Gastrocnemius medialis (tissue), 4 donors: ENCODE measurements at regions of chr19 and their contacts with region 1.

Region 1: DNA sequence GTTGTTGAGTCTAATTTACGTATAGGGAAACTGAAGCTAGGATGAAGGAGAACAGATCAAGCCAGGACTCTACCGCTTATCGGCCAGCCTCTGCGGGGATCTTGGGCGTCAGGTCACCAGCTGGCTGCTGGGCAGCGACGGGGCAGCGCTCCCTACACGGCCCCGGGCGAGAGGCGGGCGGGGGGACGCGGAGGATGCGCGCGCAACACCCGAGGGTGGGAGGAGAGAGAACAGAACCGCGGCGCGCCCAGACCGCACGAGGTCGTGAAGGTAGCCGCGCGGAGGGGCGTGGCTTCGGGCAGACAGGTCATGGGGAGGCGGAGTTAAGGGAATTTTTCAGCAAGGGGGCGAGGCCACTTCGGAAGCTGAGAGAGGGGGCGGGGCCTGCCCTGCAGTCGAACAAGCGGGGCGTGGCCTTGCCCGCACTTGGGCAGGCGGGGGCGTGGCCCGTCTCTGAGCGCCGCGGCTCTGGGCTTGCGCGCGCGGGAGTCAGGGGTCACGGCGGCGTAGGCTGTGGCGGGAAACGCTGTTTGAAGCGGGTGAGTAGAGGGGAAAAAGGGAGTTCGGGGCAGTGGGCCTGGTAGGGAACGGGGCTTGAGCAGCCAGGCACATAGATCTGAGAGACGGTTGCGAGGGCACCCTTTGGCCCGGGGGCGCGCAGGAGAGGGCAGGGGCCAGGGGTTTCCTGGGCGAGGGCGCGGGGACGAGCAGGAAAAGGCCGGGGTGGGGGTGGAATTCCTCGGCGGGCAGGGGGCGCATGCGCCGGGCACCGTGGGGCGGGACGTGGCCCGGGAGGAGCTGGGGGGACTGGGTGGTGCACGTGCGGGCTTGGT is at the start of gene POLD1:
- DNase-seq: peak; percentile 95 to 97
- ATAC-seq: peak; percentile 93 to 94
- H3K4me3 ChIP-seq: peak within 1 kb of the TSS; percentile 63 to 83 (median 76)
- H3K27ac ChIP-seq: peak within 1 kb of the TSS; percentile 71 to 95 (median 84)
- H3K4me1 ChIP-seq: peaks cover 8 to 14% of the 10 kb centered on the region in 2 donors
- H3K27me3 ChIP-seq: no peaks in the 10 kb centered on the region
- CTCF ChIP-seq: no peak
- POLR2A ChIP-seq: peak in 1 of 2 donors; percentile 32
- total RNA-seq, gene POLD1: 4.0 to 18.3 (median 6.0) TPM

Region 2: DNA sequence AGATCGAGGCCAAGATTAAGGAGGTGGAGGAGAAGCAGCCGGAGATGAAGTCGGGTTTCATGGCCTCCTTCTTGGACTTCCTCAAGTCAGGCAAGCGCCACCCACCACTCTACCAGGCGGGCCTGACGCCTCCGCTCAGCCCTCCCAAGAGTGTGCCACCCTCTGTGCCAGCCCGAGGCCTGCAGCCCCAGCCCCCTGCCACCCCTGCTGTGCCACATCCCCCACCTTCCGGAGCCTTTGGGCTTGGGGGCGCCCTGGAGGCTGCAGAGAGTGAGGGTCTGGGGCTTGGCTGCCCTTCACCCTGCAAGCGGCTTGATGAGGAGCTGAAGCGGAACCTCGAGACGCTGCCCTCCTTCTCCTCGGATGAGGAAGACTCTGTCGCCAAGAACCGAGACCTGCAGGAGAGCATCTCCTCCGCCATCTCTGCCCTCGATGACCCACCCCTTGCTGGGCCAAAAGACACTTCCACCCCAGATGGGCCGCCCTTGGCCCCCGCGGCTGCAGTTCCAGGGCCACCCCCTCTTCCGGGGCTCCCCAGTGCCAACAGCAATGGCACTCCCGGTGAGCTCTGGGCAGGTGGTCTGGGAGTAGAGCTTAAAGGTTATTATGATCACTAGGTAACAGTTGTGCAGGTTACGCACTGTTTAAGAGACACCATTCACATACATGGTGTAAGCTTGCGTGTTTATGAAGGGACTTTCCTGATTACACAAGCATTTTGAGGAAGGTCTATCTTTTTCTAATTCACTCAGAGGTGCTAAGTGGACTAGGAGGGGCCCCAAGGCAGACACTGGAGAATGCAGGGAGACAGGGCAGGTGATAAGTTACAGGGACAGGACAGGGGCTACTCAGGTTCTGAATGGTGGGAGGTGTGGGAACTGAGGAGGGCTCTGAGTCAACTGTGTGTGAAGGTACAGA is 784.4 kb before region 1 on chr19:
- in situ Hi-C with region 1: no loop called
- intact Hi-C with region 1: no loop called
- DNase-seq: no peak
- ATAC-seq: no peak
- H3K4me3 ChIP-seq: no peak overlapping the region
- H3K27ac ChIP-seq: no peak overlapping the region
- H3K4me1 ChIP-seq: no peaks in the 10 kb centered on the region
- H3K27me3 ChIP-seq: no peaks in the 10 kb centered on the region
- CTCF ChIP-seq: no peak
- POLR2A ChIP-seq: no peak

Region 3: DNA sequence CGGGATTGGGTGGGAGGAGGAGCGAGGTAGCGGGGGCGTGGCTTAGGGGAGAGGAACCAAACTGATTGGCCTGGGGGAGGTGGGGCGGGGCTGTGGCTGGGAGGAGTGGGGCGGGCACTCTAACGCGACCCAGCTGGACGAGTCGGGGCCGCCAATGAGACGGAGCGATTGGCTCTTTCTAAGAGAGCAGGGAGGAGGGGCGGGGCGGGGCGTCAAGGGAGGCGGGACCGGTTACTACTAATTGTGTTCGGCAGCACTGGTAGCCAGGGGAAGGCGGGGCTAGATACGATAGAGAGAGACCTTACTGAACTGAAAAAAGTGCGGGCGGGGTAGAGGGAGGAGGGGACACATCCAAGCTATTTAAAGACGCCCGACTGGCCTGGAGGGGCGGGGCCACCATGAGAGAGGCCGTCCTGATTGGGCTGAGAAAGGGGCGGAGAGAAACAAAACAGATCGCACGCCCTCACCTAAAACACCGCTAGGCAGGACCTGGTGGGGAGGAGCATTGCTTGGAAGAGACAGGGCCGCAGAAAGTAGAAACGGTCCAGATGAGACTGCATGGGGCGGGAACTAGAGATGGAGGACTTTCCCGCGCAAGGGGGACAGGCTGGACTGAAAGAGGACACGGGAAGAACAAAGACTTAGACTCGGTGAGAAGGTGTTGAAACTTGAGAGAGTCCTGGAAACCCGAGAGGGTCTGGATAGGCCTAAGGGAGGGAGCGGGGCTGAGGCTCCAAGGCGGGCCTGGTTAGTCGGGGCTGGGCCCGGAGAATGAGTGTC is 54.7 kb before region 1 on chr19 and contains the start of gene KCNC3:
- in situ Hi-C with region 1: no loop called
- intact Hi-C with region 1: loop called (anchors 5 kb)
- DNase-seq: peak; percentile 100
- ATAC-seq: peak; percentile 77 to 78
- H3K4me3 ChIP-seq: peak within 1 kb of the TSS; percentile 52 to 61 (median 55)
- H3K27ac ChIP-seq: peak within 1 kb of the TSS; percentile 79 to 94 (median 90)
- H3K4me1 ChIP-seq: peaks cover 38 to 45% of the 10 kb centered on the region in 2 donors
- H3K27me3 ChIP-seq: peaks cover 18 to 29% (median 23%) of the 10 kb centered on the region in 3 donors
- CTCF ChIP-seq: no peak
- POLR2A ChIP-seq: peak; percentile 86
- total RNA-seq, gene KCNC3: 0.25 to 1.4 (median 0.53) TPM